Natural killer cell (primary cell): ENCODE measurements at regions of chr17 and their contacts with region 1.

Region 1: GRCh38 chr17:27805520-27806146 is 5.3 kb upstream of the NOS2 start:
- DNase-seq: peak; percentile 68 to 93
- ATAC-seq: peak; percentile 79 to 83 (median 80)
- H3K4me3 ChIP-seq: peak overlapping the region; percentile 29
- H3K4me3 Mint-ChIP-seq: peak overlapping the region; percentile 88
- H3K27ac ChIP-seq: peak overlapping the region; percentile 4
- H3K27ac Mint-ChIP-seq: peak overlapping the region; percentile 69 to 91
- H3K4me1 ChIP-seq: peaks cover 29% of the 10 kb centered on the region
- H3K4me1 Mint-ChIP-seq: peaks cover 21 to 32% of the 10 kb centered on the region in 2 donors
- H3K27me3 ChIP-seq: no peaks in the 10 kb centered on the region
- H3K27me3 Mint-ChIP-seq: no peaks in the 10 kb centered on the region
- CTCF ChIP-seq: peak; percentile 83

Region 2: DNA sequence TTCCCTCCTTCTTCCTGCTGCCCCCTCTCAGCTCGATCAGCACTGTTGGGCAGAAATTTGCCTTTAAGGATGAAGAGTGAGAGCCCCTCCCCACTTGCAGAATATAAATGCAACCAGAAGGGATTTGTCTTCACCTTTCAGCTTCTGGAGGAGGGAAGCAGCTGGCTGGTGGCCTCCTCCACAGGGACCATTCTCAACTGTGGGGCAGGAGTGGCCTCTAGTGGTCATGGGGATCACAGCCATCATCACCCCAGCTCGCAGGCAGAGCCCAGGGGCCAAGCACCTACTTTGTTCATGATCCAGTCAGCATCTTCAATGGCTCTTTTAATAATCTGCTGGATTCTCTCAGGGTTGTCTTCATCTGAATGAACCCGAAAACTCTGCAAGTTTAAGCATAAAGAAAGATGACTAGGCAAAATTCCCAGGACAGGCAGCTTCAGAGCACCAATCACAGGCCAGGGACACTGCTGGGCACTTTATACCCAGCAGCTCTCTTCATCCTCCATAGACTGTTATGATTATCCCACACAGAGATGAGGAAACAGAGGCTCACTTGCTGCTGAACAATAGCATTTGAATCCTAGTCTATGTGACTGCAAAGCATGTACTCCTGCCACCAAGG is 74.5 kb after region 1 on chr17:
- intact Hi-C with region 1: loop called (anchors 1 kb)
- DNase-seq: peak; percentile 45 to 79
- ATAC-seq: peak; percentile 75 to 98 (median 87)
- H3K4me3 ChIP-seq: no peak overlapping the region
- H3K4me3 Mint-ChIP-seq: no peak overlapping the region
- H3K27ac ChIP-seq: no peak overlapping the region
- H3K27ac Mint-ChIP-seq: no peak overlapping the region
- H3K4me1 ChIP-seq: no peaks in the 10 kb centered on the region
- H3K4me1 Mint-ChIP-seq: no peaks in the 10 kb centered on the region
- H3K27me3 ChIP-seq: no peaks in the 10 kb centered on the region
- H3K27me3 Mint-ChIP-seq: no peaks in the 10 kb centered on the region
- CTCF ChIP-seq: peak; percentile 76

Region 3: GRCh38 chr17:27892866-27893769 is 87.5 kb after region 1 on chr17 and contains the start of gene LYRM9:
- intact Hi-C with region 1: loop called (anchors 1 kb)
- DNase-seq: peak; percentile 95 to 96
- ATAC-seq: peak; percentile 98 to 100 (median 99)
- H3K4me3 ChIP-seq: peak within 1 kb of the TSS; percentile 48
- H3K4me3 Mint-ChIP-seq: peak within 1 kb of the TSS; percentile 89
- H3K27ac ChIP-seq: peak within 1 kb of the TSS; percentile 30
- H3K27ac Mint-ChIP-seq: peak within 1 kb of the TSS; percentile 79 to 83
- H3K4me1 ChIP-seq: peaks cover 3% of the 10 kb centered on the region
- H3K4me1 Mint-ChIP-seq: peaks cover 11 to 20% of the 10 kb centered on the region in 2 donors
- H3K27me3 ChIP-seq: no peaks in the 10 kb centered on the region
- H3K27me3 Mint-ChIP-seq: peaks cover 11 to 38% of the 10 kb centered on the region in 2 donors
- CTCF ChIP-seq: peak; percentile 95
- total RNA-seq, gene LYRM9: 7.8 to 13.0 (median 9.3) TPM

Region 4: GRCh38 chr17:28252436-28252835 is 446.8 kb after region 1 on chr17:
- intact Hi-C with region 1: loop called (anchors 1 kb)
- DNase-seq: no peak
- ATAC-seq: no peak
- H3K4me3 ChIP-seq: no peak overlapping the region
- H3K4me3 Mint-ChIP-seq: peak overlapping the region; percentile 13
- H3K27ac ChIP-seq: no peak overlapping the region
- H3K27ac Mint-ChIP-seq: no peak overlapping the region
- H3K4me1 ChIP-seq: peaks cover 12% of the 10 kb centered on the region
- H3K4me1 Mint-ChIP-seq: peaks cover 10% of the 10 kb centered on the region in 2 donors
- H3K27me3 ChIP-seq: peaks cover 19% of the 10 kb centered on the region
- H3K27me3 Mint-ChIP-seq: peaks cover 14 to 15% of the 10 kb centered on the region in 2 donors
- CTCF ChIP-seq: no peak